CD8-positive, alpha-beta memory T cell (primary cell): ENCODE measurements at regions of chr3 and their contacts with region 1.

Region 1: GRCh38 chr3:129627429-129628168 is 21.1 kb upstream of the PLXND1 start:
- DNase-seq: peak; percentile 44 to 78 (median 55)
- H3K4me3 ChIP-seq: peak overlapping the region; percentile 75
- H3K4me3 Mint-ChIP-seq: peak overlapping the region; percentile 85 to 94 (median 89)
- H3K27ac ChIP-seq: peak overlapping the region; percentile 43
- H3K27ac Mint-ChIP-seq: peak overlapping the region; percentile 16 to 91 (median 80)
- H3K4me1 ChIP-seq: peaks cover 13% of the 10 kb centered on the region
- H3K4me1 Mint-ChIP-seq: peaks cover 16 to 22% (median 20%) of the 10 kb centered on the region in 3 donors
- H3K27me3 ChIP-seq: no peaks in the 10 kb centered on the region
- H3K27me3 Mint-ChIP-seq: peaks cover 0 to 1% of the 10 kb centered on the region in 2 donors

Region 2: GRCh38 chr3:129824926-129825541 is 197.4 kb after region 1 on chr3:
- CTCF ChIA-PET with region 1: interaction called, 14 read pairs
- POLR2A ChIA-PET with region 1: no interaction called
- DNase-seq: peak; percentile 13 to 62 (median 39)
- H3K4me3 ChIP-seq: no peak overlapping the region
- H3K4me3 Mint-ChIP-seq: no peak overlapping the region
- H3K27ac ChIP-seq: no peak overlapping the region
- H3K27ac Mint-ChIP-seq: peak overlapping the region in 4 of 8 donors; percentile 4 to 64 (median 34)
- H3K4me1 ChIP-seq: peaks cover 14% of the 10 kb centered on the region
- H3K4me1 Mint-ChIP-seq: peaks cover 19 to 33% (median 26%) of the 10 kb centered on the region in 3 donors
- H3K27me3 ChIP-seq: no peaks in the 10 kb centered on the region
- H3K27me3 Mint-ChIP-seq: peaks cover 0 to 2% of the 10 kb centered on the region in 2 donors